Sciatic nerve (tissue), 2 donors: ENCODE measurements at regions of chr19 and their contacts with region 1.

Region 1: DNA sequence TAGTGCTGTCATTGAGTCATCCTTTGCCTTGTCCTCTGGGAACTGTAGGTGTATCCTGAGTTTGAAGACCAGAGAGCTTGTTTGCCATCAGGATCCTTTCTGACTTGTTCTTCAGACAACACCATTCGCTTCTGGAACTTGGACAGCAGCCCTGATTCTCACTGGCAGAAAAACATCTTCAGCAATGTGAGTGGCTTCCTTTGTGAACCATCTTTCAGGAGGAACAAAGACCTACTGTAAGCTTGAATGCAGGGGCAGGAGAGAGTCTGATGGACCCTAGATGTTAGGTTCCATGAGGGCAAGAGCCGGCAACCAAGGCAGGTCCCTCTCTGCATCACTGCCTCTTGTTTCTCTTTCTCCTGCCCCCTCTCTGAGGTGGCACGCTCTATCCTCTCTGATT is 26.7 kb downstream of the WDR62 start:
- DNase-seq: no peak
- ATAC-seq: peak; percentile 79

Region 2: DNA sequence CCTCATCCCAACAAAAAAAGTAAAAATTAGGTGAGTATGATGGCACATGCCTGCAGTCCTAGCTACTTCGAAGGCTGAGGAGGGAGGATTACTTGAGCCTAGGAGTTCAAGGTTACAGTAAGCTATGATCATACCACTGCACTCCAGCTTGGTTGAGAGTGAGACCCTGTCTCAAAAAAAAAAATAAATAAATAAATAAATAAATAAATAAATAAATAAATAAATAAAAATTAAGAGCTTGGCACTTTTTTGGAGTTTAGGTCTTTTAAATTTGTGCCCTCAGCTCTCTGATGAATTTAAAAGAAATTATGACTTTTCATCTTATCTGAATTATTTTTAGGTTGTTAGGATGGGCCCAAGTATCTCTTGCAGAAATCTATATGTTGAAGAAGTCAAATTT is 1005.7 kb after region 1 on chr19:
- intact Hi-C with region 1: loop called (anchors 5 kb)
- DNase-seq: no peak
- ATAC-seq: no peak